ENCODE measurements at regions of chr2 and their contacts with region 1.

Region 1: GRCh38 chr2:9095690-9096351 is 92.3 kb upstream of the MBOAT2 start:
- DNase-seq: peak; percentile 60 to 67
- ATAC-seq: peak; percentile 77 to 91 (median 84)
- H3K4me3 ChIP-seq: peak overlapping the region in 7 of 10 donors; percentile 11 to 36 (median 26)
- H3K27ac ChIP-seq: peak overlapping the region in 5 of 10 donors; percentile 15 to 77 (median 59)
- H3K4me1 ChIP-seq: peaks cover 2 to 30% (median 17%) of the 10 kb centered on the region in 9 donors
- H3K27me3 ChIP-seq: no peaks in the 10 kb centered on the region
- CTCF ChIP-seq: peak in 7 of 9 donors; percentile 17 to 58 (median 35)

Region 2: GRCh38 chr2:8872821-8873432 is 222.9 kb before region 1 on chr2:
- intact Hi-C with region 1: loop called in 1 of 10 experiments (anchors 10 kb)
- DNase-seq: no peak
- ATAC-seq: peak in 1 of 8 donors; percentile 37
- H3K4me3 ChIP-seq: no peak overlapping the region
- H3K27ac ChIP-seq: no peak overlapping the region
- H3K4me1 ChIP-seq: no peaks in the 10 kb centered on the region
- H3K27me3 ChIP-seq: no peaks in the 10 kb centered on the region
- CTCF ChIP-seq: peak in 8 of 9 donors; percentile 25 to 68 (median 58)

Region 3: GRCh38 chr2:9003616-9004337 is 92.0 kb before region 1 on chr2 and contains the start of gene MBOAT2:
- intact Hi-C with region 1: loop called in 1 of 10 experiments (anchors 10 kb)
- DNase-seq: peak; percentile 86 to 90
- ATAC-seq: peak; percentile 94 to 98 (median 97)
- H3K4me3 ChIP-seq: peak within 1 kb of the TSS; percentile 58 to 83 (median 76)
- H3K27ac ChIP-seq: peak within 1 kb of the TSS; percentile 32 to 91 (median 84)
- H3K4me1 ChIP-seq: peaks cover 0 to 32% (median 11%) of the 10 kb centered on the region in 9 donors
- H3K27me3 ChIP-seq: no peaks in the 10 kb centered on the region
- CTCF ChIP-seq: no peak
- total RNA-seq, gene MBOAT2: 11.5 to 35.3 (median 22.2) TPM

Region 4: DNA sequence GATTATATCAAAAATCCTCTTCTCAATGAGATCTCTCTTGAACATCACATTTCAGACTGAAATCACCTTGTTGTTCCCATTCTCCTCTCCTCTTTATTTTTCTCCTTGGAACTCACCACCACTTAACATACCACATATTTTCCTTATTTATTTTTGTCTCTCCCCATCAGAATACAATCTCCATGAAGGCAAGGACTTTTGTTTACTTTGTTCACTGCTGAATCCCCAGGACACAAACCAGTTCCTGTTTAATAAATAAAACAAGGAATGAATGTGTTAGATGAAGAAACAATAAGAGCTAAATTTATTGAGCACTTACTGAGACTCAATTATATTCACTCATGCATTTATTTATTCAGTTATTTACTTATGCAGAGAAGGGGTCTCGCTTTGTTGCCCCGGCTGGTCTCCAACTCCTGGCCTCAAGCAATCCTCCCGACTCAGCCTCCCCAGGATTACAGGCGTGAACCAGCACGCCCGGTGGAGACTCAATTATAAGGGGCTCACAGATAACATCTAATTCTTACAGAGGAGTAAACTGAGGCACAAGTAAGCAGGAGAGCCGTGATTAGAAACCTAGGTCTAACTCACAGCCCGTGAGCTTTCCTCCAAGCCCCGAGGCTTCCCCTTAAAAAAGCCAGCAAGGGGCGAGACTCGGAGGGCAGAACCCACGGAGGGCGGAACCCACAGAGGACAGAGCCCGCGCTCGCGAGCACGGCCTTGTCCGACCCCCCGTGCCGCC is 746.8 kb after region 1 on chr2:
- intact Hi-C with region 1: no loop called
- DNase-seq: no peak
- ATAC-seq: no peak
- H3K4me3 ChIP-seq: peak overlapping the region; percentile 30 to 89 (median 68)
- H3K27ac ChIP-seq: peak overlapping the region in 9 of 10 donors; percentile 62 to 94 (median 85)
- H3K4me1 ChIP-seq: peaks cover 0 to 30% (median 15%) of the 10 kb centered on the region in 9 donors
- H3K27me3 ChIP-seq: no peaks in the 10 kb centered on the region
- CTCF ChIP-seq: no peak

Measured in heart right ventricle (tissue), 16 donors.